Activated CD8-positive, alpha-beta T cell treated with anti-CD3 and anti-CD28 coated beads, Interleukin-2, amount 10 ng/mL, durations not matched to agents 7 days and 5 days (primary cell): ENCODE measurements at regions of chrX and their contacts with region 1.

Region 1: GRCh38 chrX:43557792-43558191 is 98.3 kb upstream of the MAOA start:
- DNase-seq: peak; percentile 65
- ATAC-seq: no peak
- H3K4me3 Mint-ChIP-seq: no peak overlapping the region
- H3K27ac Mint-ChIP-seq: no peak overlapping the region
- H3K4me1 Mint-ChIP-seq: peaks cover 5% of the 10 kb centered on the region
- H3K27me3 Mint-ChIP-seq: no peaks in the 10 kb centered on the region

Region 2: GRCh38 chrX:43349363-43349762 is 208.4 kb before region 1 on chrX:
- CTCF ChIA-PET with region 1: interaction called, 22 read pairs
- POLR2A ChIA-PET with region 1: no interaction called
- DNase-seq: peak; percentile 43
- ATAC-seq: no peak
- H3K4me3 Mint-ChIP-seq: no peak overlapping the region
- H3K27ac Mint-ChIP-seq: no peak overlapping the region
- H3K4me1 Mint-ChIP-seq: no peaks in the 10 kb centered on the region
- H3K27me3 Mint-ChIP-seq: no peaks in the 10 kb centered on the region

Region 3: DNA sequence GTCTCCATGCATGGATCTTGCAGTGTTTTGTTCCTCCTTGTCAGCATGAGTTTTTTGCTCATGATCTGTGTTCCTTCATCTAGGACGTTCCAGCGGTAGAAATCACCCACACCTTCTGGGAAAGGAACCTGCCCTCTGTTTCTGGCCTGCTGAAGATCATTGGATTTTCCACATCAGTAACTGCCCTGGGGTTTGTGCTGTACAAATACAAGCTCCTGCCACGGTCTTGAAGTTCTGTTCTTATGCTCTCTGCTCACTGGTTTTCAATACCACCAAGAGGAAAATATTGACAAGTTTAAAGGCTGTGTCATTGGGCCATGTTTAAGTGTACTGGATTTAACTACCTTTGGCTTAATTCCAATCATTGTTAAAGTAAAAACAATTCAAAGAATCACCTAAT is 186.5 kb after region 1 on chrX:
- CTCF ChIA-PET with region 1: no interaction called
- POLR2A ChIA-PET with region 1: no interaction called
- DNase-seq: no peak
- ATAC-seq: no peak
- H3K4me3 Mint-ChIP-seq: no peak overlapping the region
- H3K27ac Mint-ChIP-seq: no peak overlapping the region
- H3K4me1 Mint-ChIP-seq: no peaks in the 10 kb centered on the region
- H3K27me3 Mint-ChIP-seq: no peaks in the 10 kb centered on the region